Panc1 (cell line): ENCODE measurements at regions of chr7 and their contacts with region 1.

Region 1: GRCh38 chr7:50293509-50294179 is 10.9 kb upstream of the IKZF1 start:
- DNase-seq: no peak
- ATAC-seq: no peak
- H3K4me3 ChIP-seq: no peak overlapping the region
- H3K27ac ChIP-seq: no peak overlapping the region
- H3K4me1 ChIP-seq: no peaks in the 10 kb centered on the region
- H3K27me3 ChIP-seq: peaks cover 16% of the 10 kb centered on the region
- CTCF ChIP-seq: no peak

Region 2: DNA sequence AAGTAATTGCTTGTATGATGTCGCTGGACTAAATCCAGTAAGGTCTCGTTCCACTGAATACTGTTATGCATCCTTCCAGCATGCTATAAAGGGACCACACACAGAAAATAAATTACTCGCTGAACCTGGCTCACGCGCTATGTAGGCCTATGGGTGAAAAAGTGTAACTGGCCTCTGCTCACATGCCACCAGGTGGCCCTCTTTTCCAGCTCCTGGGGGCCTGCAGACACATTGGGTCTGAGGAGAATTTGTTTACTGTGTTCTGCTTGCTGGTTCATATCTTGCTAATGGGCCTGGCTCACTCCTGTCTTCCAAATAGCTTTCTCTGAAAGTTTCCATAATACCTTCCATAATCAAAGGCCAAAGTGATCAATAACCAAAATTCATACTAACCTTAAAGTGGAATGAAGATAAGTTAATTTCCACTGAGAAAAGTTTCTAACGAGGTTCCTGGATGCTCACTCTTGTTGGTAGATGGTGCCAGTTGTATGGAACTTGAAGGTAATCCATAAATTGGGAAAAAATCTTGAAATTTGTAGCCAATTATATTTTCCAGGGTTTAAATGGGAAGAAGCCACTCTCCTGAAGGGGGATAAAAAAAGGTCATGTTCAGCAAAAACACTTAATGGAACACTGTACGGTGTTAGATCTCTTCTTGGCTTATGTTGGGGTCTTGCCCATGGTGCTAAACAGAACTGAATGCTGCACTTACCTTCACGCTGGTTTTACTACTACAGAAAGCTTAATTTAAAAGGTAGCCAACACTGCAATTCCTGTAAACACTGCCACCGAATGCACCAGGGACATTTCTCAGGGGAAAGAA is 173.6 kb before region 1 on chr7:
- CTCF ChIA-PET with region 1: no interaction called
- POLR2A ChIA-PET with region 1: no interaction called
- in situ Hi-C with region 1: no loop called
- intact Hi-C with region 1: no loop called
- DNase-seq: no peak
- ATAC-seq: no peak
- H3K4me3 ChIP-seq: no peak overlapping the region
- H3K27ac ChIP-seq: no peak overlapping the region
- H3K4me1 ChIP-seq: no peaks in the 10 kb centered on the region
- H3K27me3 ChIP-seq: peaks cover 13% of the 10 kb centered on the region
- CTCF ChIP-seq: peak; percentile 34

Region 3: GRCh38 chr7:50349963-50350944 is 56.6 kb after region 1 on chr7:
- CTCF ChIA-PET with region 1: no interaction called
- POLR2A ChIA-PET with region 1: no interaction called
- in situ Hi-C with region 1: no loop called
- intact Hi-C with region 1: loop called (anchors 10 kb)
- DNase-seq: no peak
- ATAC-seq: no peak
- H3K4me3 ChIP-seq: no peak overlapping the region
- H3K27ac ChIP-seq: no peak overlapping the region
- H3K4me1 ChIP-seq: peaks cover 8% of the 10 kb centered on the region; the same call in 1 of the 2 replicates
- H3K27me3 ChIP-seq: peaks cover 20% of the 10 kb centered on the region
- CTCF ChIP-seq: no peak